ENCODE measurements at regions of chr15 and their contacts with region 1.

Region 1: DNA sequence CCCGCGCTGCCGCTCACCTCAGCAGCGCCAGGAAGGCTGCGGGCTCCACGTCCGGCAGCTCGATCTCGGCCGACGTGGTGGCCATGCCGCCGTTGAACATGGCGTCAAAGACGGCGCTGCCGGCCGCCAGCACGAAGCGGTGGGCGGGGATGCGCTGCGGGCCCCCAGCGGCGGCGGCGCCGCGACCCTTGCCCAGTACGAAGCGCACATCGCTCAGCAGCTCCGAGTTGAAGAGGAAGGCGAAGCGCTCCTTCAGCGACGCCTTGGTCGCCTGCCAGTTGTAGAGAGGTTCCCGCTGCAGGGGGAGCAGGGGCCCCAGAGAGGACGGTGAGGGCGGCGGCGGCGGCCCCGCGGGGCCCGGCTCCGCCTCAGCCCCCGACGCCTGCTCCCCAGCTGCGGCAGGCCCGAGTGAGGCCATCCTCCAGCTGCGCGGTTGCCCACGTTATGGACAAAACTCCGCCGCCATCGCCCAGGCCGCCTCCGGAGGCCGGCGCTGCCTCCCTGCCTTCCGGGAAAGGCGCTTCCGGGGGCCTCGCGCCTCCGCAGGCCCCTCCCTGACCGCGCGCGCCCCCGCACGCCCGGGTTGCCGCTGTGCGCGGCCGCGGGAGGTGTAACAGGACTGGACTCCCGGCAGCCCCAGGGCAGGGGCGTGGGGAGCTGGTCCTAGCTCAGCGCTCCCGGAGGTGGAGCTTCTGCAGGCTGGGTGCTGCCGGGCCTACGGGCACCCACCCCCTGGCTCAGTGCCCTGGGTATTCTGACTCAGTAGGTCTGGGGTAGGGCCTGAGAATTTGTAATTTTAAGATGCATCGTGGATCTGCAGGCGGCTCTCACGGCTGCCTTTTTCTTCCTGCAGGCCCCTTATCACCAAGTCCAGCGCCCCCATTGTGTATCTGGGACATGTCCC is at the start of gene BTBD1:
- DNase-seq: peak; percentile 84
- H3K4me3 Mint-ChIP-seq: peak within 1 kb of the TSS; percentile 84
- H3K27ac Mint-ChIP-seq: peak within 1 kb of the TSS; percentile 83
- H3K4me1 Mint-ChIP-seq: peaks cover 32% of the 10 kb centered on the region
- H3K27me3 Mint-ChIP-seq: peaks cover 2% of the 10 kb centered on the region
- total RNA-seq, gene BTBD1: 61.7 and 61.8 TPM in 2 replicates

Region 2: GRCh38 chr15:82832601-82833361 is 234.2 kb before region 1 on chr15:
- intact Hi-C with region 1: loop called (anchors 5 kb)
- DNase-seq: peak; percentile 17
- H3K4me3 Mint-ChIP-seq: peak overlapping the region; percentile 57
- H3K27ac Mint-ChIP-seq: peak overlapping the region; percentile 87
- H3K4me1 Mint-ChIP-seq: peaks cover 54% of the 10 kb centered on the region
- H3K27me3 Mint-ChIP-seq: peaks cover 2% of the 10 kb centered on the region

Region 3: GRCh38 chr15:83053151-83053550 is 13.8 kb before region 1 on chr15:
- intact Hi-C with region 1: no loop called
- DNase-seq: no peak
- H3K4me3 Mint-ChIP-seq: no peak overlapping the region
- H3K27ac Mint-ChIP-seq: no peak overlapping the region
- H3K4me1 Mint-ChIP-seq: peaks cover 15% of the 10 kb centered on the region
- H3K27me3 Mint-ChIP-seq: no peaks in the 10 kb centered on the region

Region 4: GRCh38 chr15:83094583-83094982 is 27.6 kb after region 1 on chr15:
- intact Hi-C with region 1: no loop called
- DNase-seq: no peak
- H3K4me3 Mint-ChIP-seq: no peak overlapping the region
- H3K27ac Mint-ChIP-seq: no peak overlapping the region
- H3K4me1 Mint-ChIP-seq: peaks cover 7% of the 10 kb centered on the region
- H3K27me3 Mint-ChIP-seq: peaks cover 29% of the 10 kb centered on the region

Region 5: DNA sequence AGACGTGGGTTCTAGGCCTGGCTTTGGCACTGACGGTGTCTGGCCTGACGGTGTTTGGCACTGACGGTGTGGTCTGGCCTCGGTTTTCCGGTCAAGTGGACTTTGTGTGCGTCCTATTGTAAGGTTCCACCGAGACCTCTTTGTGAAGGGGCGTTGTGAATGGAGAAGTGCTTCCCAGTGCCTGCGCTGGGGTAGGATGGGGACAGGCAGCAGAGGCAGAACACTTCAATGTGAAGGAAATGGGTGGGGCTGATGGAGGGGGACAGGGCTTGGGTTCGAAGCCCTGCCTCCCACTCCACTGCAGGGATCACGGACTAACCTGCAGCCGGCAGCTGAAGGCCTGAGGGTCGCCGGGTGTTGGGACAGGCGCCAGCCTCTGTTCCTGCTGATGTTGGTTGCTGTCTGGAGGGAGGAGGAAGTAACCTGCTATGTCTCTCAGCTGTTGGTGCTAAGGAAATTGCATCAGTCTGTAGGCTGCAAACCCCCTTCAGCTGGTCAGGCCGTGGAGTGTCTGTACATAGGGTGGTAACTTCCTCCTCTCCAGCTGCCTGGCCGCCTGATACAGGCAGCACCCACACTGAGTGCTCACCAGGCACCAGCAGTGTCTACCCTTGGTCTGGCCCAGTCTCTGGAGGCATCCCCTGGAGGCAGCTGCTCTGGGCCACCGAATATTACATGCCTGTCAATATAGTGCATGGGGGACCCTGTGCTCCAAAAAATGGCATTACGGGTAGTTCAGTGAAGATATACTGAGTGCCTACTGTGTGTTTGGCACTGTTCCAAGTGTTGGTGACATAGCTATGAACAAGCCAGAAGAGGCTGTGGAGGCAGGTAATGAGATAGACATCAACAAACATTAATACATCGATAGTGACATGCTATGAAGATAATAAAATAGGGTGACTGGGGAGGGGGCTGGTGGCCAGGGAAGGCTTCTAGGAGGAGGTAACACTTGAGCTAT is 41.6 kb after region 1 on chr15:
- intact Hi-C with region 1: loop called (anchors 1 kb)
- DNase-seq: peak; percentile 27
- H3K4me3 Mint-ChIP-seq: peak overlapping the region; percentile 94
- H3K27ac Mint-ChIP-seq: peak overlapping the region; percentile 86
- H3K4me1 Mint-ChIP-seq: peaks cover 44% of the 10 kb centered on the region
- H3K27me3 Mint-ChIP-seq: peaks cover 11% of the 10 kb centered on the region

Region 6: GRCh38 chr15:83199288-83199687 is 132.3 kb after region 1 on chr15:
- intact Hi-C with region 1: loop called (anchors 1 kb)
- DNase-seq: no peak
- H3K4me3 Mint-ChIP-seq: peak overlapping the region; percentile 12
- H3K27ac Mint-ChIP-seq: peak overlapping the region; percentile 72
- H3K4me1 Mint-ChIP-seq: peaks cover 53% of the 10 kb centered on the region
- H3K27me3 Mint-ChIP-seq: peaks cover 17% of the 10 kb centered on the region

Measured in activated T-helper 1 cell treated with anti-CD3 and anti-CD28 coated beads, Interleukin-12 subunit alpha, Interleukin-12 subunit beta, Interleukin-2, Interleukin-4 antibody, amounts not matched to agents 30 ng/mL and 10 ng/mL and 1 ng/mL, durations not matched to agents 14 hours and 24 hours and 36 hours (primary cell).